Heart right ventricle (tissue), 16 donors: ENCODE measurements at regions of chr11 and their contacts with region 1.

Region 1: DNA sequence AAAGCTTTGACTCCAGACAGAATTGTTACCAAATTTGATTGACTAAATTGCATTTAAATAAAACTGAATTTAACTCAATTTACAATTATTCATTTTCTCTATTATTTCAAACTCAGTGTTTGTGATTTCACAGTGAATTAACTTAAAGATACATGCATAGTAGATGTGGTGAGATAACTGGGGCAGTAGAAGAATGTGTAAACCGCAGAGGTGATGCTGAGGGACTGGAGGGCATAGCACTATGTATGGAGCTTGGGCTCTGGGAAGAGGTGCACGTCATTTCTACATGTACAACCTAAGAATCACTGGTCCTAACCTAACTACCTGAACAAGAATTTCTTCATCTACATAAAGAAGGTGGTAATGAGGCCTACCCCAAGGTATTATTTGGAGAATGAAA is 13.7 kb downstream of the OR5B17 start:
- DNase-seq: no peak
- ATAC-seq: no peak
- H3K4me3 ChIP-seq: no peak overlapping the region
- H3K27ac ChIP-seq: no peak overlapping the region
- H3K4me1 ChIP-seq: no peaks in the 10 kb centered on the region
- H3K27me3 ChIP-seq: no peaks in the 10 kb centered on the region
- CTCF ChIP-seq: no peak

Region 2: DNA sequence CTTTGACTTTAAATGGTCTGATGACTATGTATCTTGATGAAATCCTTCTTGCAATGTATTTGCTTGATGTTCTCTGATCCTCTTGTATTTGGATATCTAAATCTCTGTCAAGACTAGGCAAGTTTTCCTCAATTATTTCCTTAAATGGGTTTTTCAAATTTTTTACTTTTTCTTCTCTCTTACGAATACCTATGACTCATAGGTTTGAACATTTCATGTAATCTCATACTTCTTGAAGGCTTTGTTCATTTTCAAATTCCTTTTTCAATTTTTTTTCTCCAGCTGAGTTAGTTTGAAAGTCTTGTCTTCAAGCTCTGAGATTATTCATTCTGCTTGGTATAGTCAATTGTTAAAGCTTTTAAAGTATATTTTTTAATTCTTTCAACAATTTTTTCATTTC is 90.3 kb before region 1 on chr11:
- intact Hi-C with region 1: loop called in 1 of 10 experiments (anchors 10 kb)
- DNase-seq: no peak
- ATAC-seq: no peak
- H3K4me3 ChIP-seq: no peak overlapping the region
- H3K27ac ChIP-seq: no peak overlapping the region
- H3K4me1 ChIP-seq: no peaks in the 10 kb centered on the region
- H3K27me3 ChIP-seq: no peaks in the 10 kb centered on the region
- CTCF ChIP-seq: no peak